CD8-positive, alpha-beta T cell (primary cell): ENCODE measurements at regions of chr16 and their contacts with region 1.

Region 1: GRCh38 chr16:72142476-72142875 is 29.5 kb downstream of the PMFBP1 start:
- DNase-seq: no peak
- ATAC-seq: no peak
- H3K4me3 ChIP-seq: no peak overlapping the region
- H3K4me3 Mint-ChIP-seq: no peak overlapping the region
- H3K27ac ChIP-seq: no peak overlapping the region
- H3K27ac Mint-ChIP-seq: no peak overlapping the region
- H3K4me1 ChIP-seq: no peaks in the 10 kb centered on the region
- H3K4me1 Mint-ChIP-seq: no peaks in the 10 kb centered on the region
- H3K27me3 ChIP-seq: no peaks in the 10 kb centered on the region
- H3K27me3 Mint-ChIP-seq: peaks cover 2% of the 10 kb centered on the region
- CTCF ChIP-seq: no peak

Region 2: GRCh38 chr16:72021043-72021442 is 121.4 kb before region 1 on chr16:
- CTCF ChIA-PET with region 1: no interaction called
- POLR2A ChIA-PET with region 1: no interaction called
- intact Hi-C with region 1: no loop called
- DNase-seq: no peak
- ATAC-seq: no peak
- H3K4me3 ChIP-seq: no peak overlapping the region
- H3K4me3 Mint-ChIP-seq: no peak overlapping the region
- H3K27ac ChIP-seq: no peak overlapping the region
- H3K27ac Mint-ChIP-seq: no peak overlapping the region
- H3K4me1 ChIP-seq: no peaks in the 10 kb centered on the region
- H3K4me1 Mint-ChIP-seq: no peaks in the 10 kb centered on the region
- H3K27me3 ChIP-seq: no peaks in the 10 kb centered on the region
- H3K27me3 Mint-ChIP-seq: no peaks in the 10 kb centered on the region
- CTCF ChIP-seq: no peak

Region 3: GRCh38 chr16:72172105-72173034 is 29.9 kb after region 1 on chr16 and contains the start of gene PMFBP1:
- CTCF ChIA-PET with region 1: no interaction called
- POLR2A ChIA-PET with region 1: no interaction called
- intact Hi-C with region 1: no loop called
- DNase-seq: peak in 2 of 9 experiments; percentile 25 to 55
- ATAC-seq: no peak
- H3K4me3 ChIP-seq: no peak within 1 kb of the TSS
- H3K4me3 Mint-ChIP-seq: no peak within 1 kb of the TSS
- H3K27ac ChIP-seq: no peak within 1 kb of the TSS
- H3K27ac Mint-ChIP-seq: no peak within 1 kb of the TSS
- H3K4me1 ChIP-seq: no peaks in the 10 kb centered on the region
- H3K4me1 Mint-ChIP-seq: no peaks in the 10 kb centered on the region
- H3K27me3 ChIP-seq: no peaks in the 10 kb centered on the region
- H3K27me3 Mint-ChIP-seq: no peaks in the 10 kb centered on the region
- CTCF ChIP-seq: no peak
- total RNA-seq, gene PMFBP1: 0.50 to 0.84 TPM

Region 4: DNA sequence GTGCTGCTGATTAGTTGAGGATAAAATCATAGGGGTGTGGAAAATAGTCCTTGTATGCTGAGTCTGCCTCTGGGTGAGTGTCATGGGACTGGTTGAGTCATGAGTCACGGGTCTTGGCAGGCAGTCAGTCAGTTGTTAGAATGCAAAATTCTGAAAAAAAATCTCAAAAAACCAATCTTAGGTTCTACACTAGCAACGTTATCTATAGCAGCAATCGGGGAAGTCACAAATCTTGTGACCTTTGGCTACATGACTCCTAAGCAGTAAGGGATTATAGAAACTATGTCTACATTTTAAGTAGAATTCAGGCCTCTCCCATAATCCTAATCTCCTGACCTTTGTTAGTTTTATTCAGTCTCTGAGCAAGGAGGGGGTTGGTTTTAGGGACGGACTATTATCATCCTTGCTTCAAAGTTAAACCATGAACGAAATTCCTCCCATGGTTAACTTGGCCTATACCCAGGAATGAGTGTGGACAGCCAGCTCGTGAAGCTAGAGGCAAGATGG is 47.4 kb after region 1 on chr16:
- CTCF ChIA-PET with region 1: no interaction called
- POLR2A ChIA-PET with region 1: no interaction called
- intact Hi-C with region 1: loop called in 1 of 2 experiments (anchors 5 kb)
- DNase-seq: peak in 1 of 9 experiments; percentile 6
- ATAC-seq: no peak
- H3K4me3 ChIP-seq: no peak overlapping the region
- H3K4me3 Mint-ChIP-seq: no peak overlapping the region
- H3K27ac ChIP-seq: no peak overlapping the region
- H3K27ac Mint-ChIP-seq: no peak overlapping the region
- H3K4me1 ChIP-seq: no peaks in the 10 kb centered on the region
- H3K4me1 Mint-ChIP-seq: no peaks in the 10 kb centered on the region
- H3K27me3 ChIP-seq: no peaks in the 10 kb centered on the region
- H3K27me3 Mint-ChIP-seq: no peaks in the 10 kb centered on the region
- CTCF ChIP-seq: no peak